PC-3 (cell line): ENCODE measurements at regions of chr17 and their contacts with region 1.

Region 1: DNA sequence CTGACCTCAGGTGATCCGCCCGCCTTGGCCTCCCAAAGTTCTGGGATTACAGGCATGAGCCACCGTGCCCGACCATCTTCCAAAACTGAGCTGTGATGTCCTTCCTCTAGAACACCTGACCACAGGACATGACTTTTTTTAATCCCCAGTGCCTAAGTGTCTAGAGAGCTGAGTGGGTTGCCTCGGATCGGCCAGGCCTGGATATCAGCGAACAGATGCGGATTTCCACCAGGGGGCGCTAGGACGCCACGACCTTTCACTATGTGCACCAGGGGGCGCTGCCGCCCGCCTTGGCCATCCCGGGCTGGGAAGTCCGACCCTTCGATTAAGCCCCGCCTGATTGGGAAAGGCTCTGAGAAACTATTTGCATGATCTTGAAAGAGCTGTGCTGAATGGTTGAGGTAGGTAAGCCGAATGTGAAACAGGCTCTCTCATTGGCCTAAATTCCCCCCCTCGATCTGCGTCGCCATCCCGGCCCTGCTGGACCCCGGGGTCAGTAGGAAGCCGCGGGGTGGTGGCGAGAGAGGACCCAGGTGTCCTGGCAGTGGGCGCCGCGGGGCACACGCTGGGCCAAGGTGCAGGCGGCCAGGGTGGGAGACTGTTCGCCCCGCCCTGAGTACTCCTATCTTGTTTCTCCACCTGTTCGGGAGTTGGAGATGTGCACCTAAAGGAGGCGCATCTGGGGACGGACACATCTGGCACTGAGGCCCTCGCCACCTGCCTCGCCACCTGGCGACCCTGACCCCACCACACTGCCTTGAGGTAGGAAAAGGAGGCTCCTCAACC is at the start of gene ACBD4:
- DNase-seq: peak; percentile 99
- ATAC-seq: peak; percentile 69
- H3K4me3 ChIP-seq: peak within 1 kb of the TSS; percentile 70
- H3K27ac ChIP-seq: no peak within 1 kb of the TSS
- H3K4me1 ChIP-seq: peaks cover 22% of the 10 kb centered on the region
- H3K27me3 ChIP-seq: no peaks in the 10 kb centered on the region
- CTCF ChIP-seq: peak; percentile 100
- total RNA-seq, gene ACBD4: 12.9 and 17.3 TPM in 2 replicates

Region 2: GRCh38 chr17:44977814-44978550 is 157.4 kb before region 1 on chr17:
- CTCF ChIA-PET with region 1: no interaction called
- POLR2A ChIA-PET with region 1: no interaction called
- intact Hi-C with region 1: no loop called
- DNase-seq: no peak
- ATAC-seq: no peak
- H3K4me3 ChIP-seq: no peak overlapping the region
- H3K27ac ChIP-seq: no peak overlapping the region
- H3K4me1 ChIP-seq: peaks cover 25% of the 10 kb centered on the region
- H3K27me3 ChIP-seq: no peaks in the 10 kb centered on the region
- CTCF ChIP-seq: no peak

Region 3: DNA sequence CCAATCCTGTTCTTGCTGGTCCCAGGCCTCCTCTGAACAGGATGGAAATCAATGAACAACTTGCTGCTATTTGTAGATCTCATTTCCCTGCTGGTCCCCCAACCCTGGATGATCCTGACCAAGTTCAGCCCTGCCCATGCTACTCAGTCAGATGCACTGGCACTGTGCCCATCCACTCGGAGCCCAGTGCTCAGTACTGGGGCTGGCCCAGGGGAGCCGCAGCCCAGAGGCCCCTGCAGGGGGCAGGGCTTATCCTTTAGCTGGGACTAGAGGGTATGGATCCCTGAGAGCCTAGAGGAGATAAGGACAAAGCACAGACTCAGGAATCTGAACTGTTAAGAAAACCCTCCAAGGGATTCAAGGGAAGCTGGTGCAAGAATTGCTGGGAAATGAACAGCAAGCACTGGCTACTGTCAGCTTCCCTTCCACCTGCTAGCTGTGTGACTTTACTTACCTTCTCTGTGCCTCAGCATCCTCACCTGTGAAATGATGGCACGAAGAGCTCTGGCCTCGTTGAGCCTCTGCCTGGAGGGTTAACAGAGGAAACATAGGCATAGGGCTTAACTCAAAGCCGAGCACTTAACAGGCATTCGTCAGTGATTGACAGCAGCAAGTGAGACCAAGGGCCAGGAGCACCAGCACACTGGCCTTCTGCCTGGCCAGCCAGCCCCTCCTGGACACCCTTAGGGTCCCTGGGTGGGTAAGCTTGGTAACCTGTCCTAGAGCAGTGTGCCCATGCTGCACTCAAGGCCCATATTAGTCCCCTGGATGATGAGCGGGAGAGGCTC is 137.5 kb before region 1 on chr17:
- CTCF ChIA-PET with region 1: interaction called, 12 read pairs
- POLR2A ChIA-PET with region 1: no interaction called
- intact Hi-C with region 1: no loop called
- DNase-seq: no peak
- ATAC-seq: peak; percentile 22; the same call in 1 of the 2 replicates
- H3K4me3 ChIP-seq: no peak overlapping the region
- H3K27ac ChIP-seq: no peak overlapping the region
- H3K4me1 ChIP-seq: no peaks in the 10 kb centered on the region
- H3K27me3 ChIP-seq: no peaks in the 10 kb centered on the region
- CTCF ChIP-seq: no peak

Region 4: GRCh38 chr17:45096141-45096540 is 39.2 kb before region 1 on chr17:
- CTCF ChIA-PET with region 1: interaction called, 10 read pairs
- POLR2A ChIA-PET with region 1: no interaction called
- intact Hi-C with region 1: loop called (anchors 1 kb)
- DNase-seq: peak; percentile 61
- ATAC-seq: no peak
- H3K4me3 ChIP-seq: no peak overlapping the region
- H3K27ac ChIP-seq: no peak overlapping the region
- H3K4me1 ChIP-seq: peaks cover 21% of the 10 kb centered on the region
- H3K27me3 ChIP-seq: no peaks in the 10 kb centered on the region
- CTCF ChIP-seq: peak; percentile 87

Region 5: DNA sequence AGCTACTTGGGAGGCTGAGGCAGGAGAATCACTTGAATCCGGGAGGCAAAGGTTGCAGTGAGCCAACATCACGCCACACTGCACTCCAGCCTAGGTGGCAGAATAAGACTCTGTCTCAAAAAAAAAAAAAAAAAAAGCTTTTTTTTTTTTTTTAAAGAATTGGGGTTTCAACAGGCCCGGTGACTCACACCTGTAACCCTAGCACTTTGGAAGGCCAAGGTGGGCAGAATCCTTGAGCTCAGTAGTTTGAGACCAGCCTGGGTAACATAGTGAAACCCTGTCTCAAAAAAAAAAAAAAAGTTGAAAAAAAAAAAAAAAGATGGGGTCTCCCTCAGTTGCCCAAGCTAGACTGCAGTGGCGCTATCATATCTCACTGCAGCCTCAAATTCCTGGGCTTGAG is 19.6 kb after region 1 on chr17:
- CTCF ChIA-PET with region 1: interaction called, 153 read pairs
- POLR2A ChIA-PET with region 1: interaction called, 59 read pairs
- intact Hi-C with region 1: no loop called
- DNase-seq: no peak
- ATAC-seq: no peak
- H3K4me3 ChIP-seq: no peak overlapping the region
- H3K27ac ChIP-seq: no peak overlapping the region
- H3K4me1 ChIP-seq: peaks cover 43% of the 10 kb centered on the region
- H3K27me3 ChIP-seq: no peaks in the 10 kb centered on the region
- CTCF ChIP-seq: no peak

Region 6: GRCh38 chr17:45189009-45189408 is 53.6 kb after region 1 on chr17:
- CTCF ChIA-PET with region 1: interaction called, 17 read pairs
- POLR2A ChIA-PET with region 1: no interaction called
- intact Hi-C with region 1: no loop called
- DNase-seq: no peak
- ATAC-seq: no peak
- H3K4me3 ChIP-seq: no peak overlapping the region
- H3K27ac ChIP-seq: no peak overlapping the region
- H3K4me1 ChIP-seq: peaks cover 3% of the 10 kb centered on the region
- H3K27me3 ChIP-seq: no peaks in the 10 kb centered on the region
- CTCF ChIP-seq: no peak

Region 7: DNA sequence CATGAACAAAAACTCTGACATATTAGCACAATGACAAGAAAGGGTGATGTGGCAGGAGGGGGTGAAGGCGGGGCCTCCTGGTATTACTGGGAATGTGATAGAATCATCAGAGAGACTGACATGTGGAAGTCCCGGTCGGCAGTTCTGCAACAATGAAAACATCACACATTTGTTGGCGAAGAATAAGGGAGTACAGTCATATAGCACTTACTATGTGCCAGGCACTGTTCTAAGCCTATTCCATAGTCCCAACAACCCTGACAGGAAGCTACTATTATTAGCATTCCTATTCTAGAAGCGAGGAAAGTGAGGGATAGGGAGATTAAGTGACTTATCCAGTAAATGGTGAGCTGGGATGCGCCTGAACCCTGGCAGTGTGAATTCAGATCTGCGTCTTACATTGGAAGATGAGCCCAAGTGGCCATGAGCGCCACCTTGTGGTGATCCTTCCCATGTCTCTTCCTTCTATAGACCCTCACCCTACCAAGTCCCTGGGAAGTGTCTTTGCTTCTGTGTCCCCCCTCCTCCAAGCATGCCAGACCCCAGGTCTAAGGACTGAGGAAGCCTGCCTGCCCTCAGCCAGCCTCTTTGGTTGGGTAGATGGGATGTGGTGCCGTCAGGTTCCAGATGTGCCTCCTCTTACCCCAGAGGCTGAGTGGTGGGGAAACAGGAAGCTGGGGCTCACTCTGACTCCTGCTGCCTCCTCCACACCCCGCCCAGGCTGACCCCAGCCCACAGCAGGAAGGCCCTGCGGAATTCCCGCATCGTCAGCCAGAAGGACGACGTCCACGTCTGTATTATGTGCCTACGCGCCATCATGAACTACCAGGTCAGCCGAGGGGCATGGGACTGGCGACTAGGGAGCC is 100.3 kb after region 1 on chr17:
- CTCF ChIA-PET with region 1: interaction called, 16 read pairs
- POLR2A ChIA-PET with region 1: no interaction called
- intact Hi-C with region 1: loop called (anchors 1 kb)
- DNase-seq: peak; percentile 85
- ATAC-seq: peak; percentile 66
- H3K4me3 ChIP-seq: no peak overlapping the region
- H3K27ac ChIP-seq: no peak overlapping the region
- H3K4me1 ChIP-seq: peaks cover 8% of the 10 kb centered on the region
- H3K27me3 ChIP-seq: no peaks in the 10 kb centered on the region
- CTCF ChIP-seq: peak; percentile 97